ENCODE measurements at regions of chr20 and their contacts with region 1.

Region 1: DNA sequence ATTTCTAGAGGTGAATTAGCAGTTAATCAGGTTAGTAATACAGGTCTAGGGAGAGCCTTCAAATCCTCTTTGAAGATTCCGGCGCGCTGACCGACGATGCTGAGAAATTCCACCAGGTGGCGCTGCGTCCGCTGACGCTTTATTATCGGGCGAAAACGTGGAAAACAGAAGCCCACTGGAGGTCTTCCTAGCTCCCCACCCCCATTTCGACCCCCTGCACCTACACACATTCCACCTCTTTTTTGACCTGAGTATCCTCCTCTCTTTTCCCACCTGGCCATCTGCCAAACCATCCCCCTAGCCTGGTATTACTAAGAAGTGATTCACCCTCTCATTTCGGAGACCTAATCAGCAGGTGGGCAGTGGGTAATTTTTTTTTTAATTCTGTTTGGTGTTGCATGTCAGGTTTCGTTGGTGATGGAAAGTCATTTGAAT is 65.4 kb upstream of the RIN2 start:
- DNase-seq: peak; percentile 24 to 76 (median 64)
- H3K4me3 ChIP-seq: no peak overlapping the region
- H3K27ac ChIP-seq: no peak overlapping the region
- H3K4me1 ChIP-seq: no peaks in the 10 kb centered on the region
- H3K27me3 ChIP-seq: no peaks in the 10 kb centered on the region
- CTCF ChIP-seq: peak; percentile 75 to 79 (median 78)
- EP300 ChIP-seq: no peak
- POLR2A ChIP-seq: no peak

Region 2: GRCh38 chr20:19729672-19730071 is 37.0 kb after region 1 on chr20:
- intact Hi-C with region 1: no loop called
- DNase-seq: no peak
- H3K4me3 ChIP-seq: no peak overlapping the region
- H3K27ac ChIP-seq: no peak overlapping the region
- H3K4me1 ChIP-seq: peaks cover 1% of the 10 kb centered on the region
- H3K27me3 ChIP-seq: no peaks in the 10 kb centered on the region
- CTCF ChIP-seq: no peak
- EP300 ChIP-seq: no peak
- POLR2A ChIP-seq: no peak

Region 3: DNA sequence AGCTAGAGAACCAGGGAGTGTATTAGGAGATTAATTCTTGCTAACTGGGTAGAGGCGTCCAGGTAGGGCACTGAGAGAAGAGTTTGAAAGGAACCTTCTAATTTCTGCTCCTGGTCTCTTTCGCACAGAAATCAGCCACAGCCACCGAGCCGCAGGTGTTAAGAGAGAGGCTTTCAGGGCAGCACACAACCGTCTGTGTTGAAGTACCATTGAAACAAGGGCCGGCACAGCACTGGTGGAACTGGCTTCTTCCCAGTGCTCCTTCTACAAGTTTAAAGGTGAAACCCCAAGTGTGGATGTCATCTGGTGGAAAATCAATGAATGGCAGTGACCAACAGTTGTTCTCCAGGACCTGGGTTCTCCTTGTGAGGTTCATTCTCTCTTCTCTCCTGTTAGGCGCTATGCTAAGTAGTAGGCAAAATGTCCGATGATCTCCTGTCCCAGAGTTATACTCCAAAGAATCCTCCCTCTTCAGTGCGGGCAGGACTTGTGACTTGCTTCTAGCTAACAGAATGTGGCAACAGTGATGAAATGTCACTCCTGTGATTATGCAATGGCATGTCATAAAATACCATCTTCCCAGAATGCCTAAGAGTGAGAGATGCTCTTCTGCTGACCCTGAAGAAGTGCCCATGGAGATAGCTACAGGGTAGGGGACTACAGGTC is 50.4 kb after region 1 on chr20:
- intact Hi-C with region 1: loop called in 1 of 4 experiments (anchors 10 kb)
- DNase-seq: no peak
- H3K4me3 ChIP-seq: no peak overlapping the region
- H3K27ac ChIP-seq: no peak overlapping the region
- H3K4me1 ChIP-seq: no peaks in the 10 kb centered on the region
- H3K27me3 ChIP-seq: no peaks in the 10 kb centered on the region
- CTCF ChIP-seq: no peak
- EP300 ChIP-seq: no peak
- POLR2A ChIP-seq: no peak

Region 4: DNA sequence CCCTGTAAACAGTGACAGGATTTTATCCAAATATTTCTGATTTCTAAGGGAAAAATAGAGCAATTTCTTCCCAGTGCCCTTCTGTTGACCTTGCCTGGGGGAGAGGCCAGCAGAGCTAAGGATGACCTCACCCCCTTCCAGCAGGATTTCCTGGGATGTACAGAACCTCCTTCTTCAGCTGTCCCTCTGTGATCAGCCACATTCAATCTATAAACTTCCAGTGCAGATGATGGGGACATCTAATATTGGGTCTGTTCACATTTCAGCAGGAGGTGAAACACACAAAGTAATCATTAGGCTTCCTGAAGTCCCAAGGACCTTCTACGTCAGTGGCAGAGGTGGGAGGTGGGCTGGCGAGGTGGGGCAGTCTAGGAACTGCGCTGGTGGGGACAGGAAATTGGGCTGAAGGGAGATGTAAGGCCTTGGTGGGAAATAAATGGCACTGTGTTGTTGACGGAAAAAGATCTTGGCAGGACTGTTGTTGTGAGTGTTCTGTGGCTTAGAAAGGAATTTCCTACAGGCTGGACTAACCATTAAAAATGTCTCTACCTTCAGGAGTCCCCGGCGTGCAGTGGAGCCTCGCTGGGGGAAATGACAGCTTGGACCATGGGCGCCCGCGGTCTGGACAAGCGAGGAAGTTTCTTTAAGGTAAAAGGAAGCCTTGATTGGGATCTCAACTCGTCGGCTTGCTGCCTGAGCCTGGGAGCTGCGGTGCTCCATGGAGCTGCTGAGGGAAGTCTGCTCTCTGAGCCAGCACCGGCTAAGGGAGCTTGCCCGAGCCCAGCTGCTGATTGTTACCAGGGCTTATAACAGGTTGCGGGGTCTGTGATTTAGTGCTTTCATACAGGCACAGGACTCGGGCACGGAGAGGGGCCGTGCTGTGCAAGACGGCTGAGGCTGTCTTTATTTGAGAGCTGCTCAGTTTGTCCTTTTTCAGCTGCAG is 196.6 kb after region 1 on chr20:
- intact Hi-C with region 1: loop called in 1 of 4 experiments (anchors 10 kb)
- DNase-seq: peak; percentile 54 to 73 (median 69)
- H3K4me3 ChIP-seq: peak overlapping the region; percentile 17
- H3K27ac ChIP-seq: peak overlapping the region; percentile 74 to 90
- H3K4me1 ChIP-seq: peaks cover 26% of the 10 kb centered on the region
- H3K27me3 ChIP-seq: no peaks in the 10 kb centered on the region
- CTCF ChIP-seq: no peak
- EP300 ChIP-seq: no peak
- POLR2A ChIP-seq: no peak

Region 5: DNA sequence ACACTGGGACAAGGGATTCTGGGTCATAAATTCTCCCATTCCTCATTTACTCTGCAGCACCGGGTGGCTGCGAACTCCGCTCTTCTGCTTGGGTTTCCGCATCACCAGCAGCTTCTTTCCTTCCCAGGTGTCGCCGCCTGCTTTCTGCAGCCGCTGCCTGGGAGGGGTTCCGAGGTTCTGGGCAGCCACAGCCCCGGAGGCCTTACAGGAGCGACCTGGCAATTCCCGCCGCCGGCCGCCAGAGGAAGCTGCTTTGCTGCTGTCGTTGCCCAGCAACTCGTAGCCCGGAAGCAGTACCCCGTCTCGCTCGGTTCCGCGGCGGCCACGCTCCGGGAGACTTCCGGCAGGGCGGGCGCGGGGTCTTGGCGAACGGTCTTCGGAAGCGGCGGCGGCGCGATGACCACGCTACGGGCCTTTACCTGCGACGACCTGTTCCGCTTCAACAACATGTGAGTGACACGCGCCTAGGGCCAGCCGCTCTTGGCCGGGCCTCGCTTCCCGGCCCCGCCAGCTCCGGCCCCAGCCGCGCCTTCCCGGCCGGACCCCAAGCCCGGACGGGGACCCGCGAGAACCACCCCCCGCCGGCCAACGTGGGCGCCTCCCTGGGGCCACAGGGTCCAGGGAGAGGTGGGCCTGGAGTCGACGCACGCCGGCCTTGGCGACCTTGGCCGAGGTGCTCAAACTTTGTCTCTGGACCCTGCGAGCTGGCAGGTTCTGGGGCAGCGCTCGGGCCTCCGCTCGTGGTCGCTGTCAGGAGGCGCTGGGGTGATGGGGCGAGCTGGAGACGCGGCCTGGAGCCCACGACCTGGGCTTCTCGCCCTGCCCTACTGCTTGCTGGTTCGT is 324.5 kb after region 1 on chr20 and contains the start of gene NAA20:
- intact Hi-C with region 1: no loop called
- DNase-seq: peak; percentile 90 to 95 (median 92)
- H3K4me3 ChIP-seq: peak within 1 kb of the TSS; percentile 95
- H3K27ac ChIP-seq: peak within 1 kb of the TSS in 1 of 2 donors; percentile 23
- H3K4me1 ChIP-seq: peaks cover 11% of the 10 kb centered on the region
- H3K27me3 ChIP-seq: no peaks in the 10 kb centered on the region
- CTCF ChIP-seq: peak; percentile 68 to 93 (median 92)
- EP300 ChIP-seq: no peak
- POLR2A ChIP-seq: no peak
- total RNA-seq, gene NAA20: 19.4 to 58.6 (median 43.3) TPM